Endothelial cell of umbilical vein (primary cell): ENCODE measurements at regions of chr2 and their contacts with region 1.

Region 1: GRCh38 chr2:170324640-170325046 is 146.7 kb downstream of the MYO3B start:
- DNase-seq: peak; percentile 40
- H3K4me3 ChIP-seq: no peak overlapping the region
- H3K27ac ChIP-seq: no peak overlapping the region
- H3K4me1 ChIP-seq: peaks cover 1% of the 10 kb centered on the region
- H3K27me3 ChIP-seq: peaks cover 3% of the 10 kb centered on the region in 2 experiments
- CTCF ChIP-seq: peak; percentile 56 to 57
- POLR2A ChIP-seq: no peak

Region 2: DNA sequence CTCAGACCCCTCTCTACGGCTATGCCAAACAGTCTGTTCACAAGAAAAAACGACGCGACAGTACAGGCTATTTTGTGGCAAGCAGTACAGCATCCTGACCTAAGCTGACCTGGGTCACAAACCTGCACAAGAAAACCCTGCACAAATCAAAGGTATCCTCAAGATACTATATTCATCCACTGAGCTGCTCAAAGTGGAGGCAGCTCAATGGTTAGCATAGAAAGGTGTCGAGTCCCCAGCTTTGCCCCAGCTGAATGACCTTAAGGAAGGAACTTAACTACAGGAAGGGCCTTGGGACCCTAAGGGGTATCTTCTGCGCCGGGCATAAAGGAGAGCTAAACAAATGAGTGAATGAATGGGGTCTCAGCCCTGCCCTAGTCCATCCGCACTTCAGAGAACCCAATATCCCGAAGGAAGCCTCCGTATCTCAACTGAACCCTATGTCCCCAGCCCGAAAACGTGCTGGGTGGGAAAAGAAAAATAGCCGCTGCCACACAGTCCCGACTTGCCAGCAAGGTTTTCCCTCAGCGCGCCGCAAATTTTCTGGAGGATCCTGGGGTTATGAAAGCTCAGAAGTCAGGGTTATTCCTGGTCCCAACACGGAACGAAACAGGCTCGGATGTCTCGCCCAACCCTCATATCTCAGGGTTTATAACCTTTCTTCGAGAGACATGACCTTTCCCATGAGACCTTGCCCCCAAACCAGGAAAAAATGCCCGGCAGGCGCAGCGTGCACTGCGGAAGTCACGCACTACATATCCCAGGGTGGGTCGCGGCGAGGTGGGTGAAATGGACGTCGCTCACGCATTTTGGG is 751.3 kb before region 1 on chr2 and contains the start of gene FASTKD1:
- CTCF ChIA-PET with region 1: no interaction called
- POLR2A ChIA-PET with region 1: no interaction called
- dilution Hi-C with region 1: no loop called
- intact Hi-C with region 1: no loop called
- DNase-seq: peak; percentile 89
- H3K4me3 ChIP-seq: peak within 1 kb of the TSS; percentile 76 to 95 (median 76)
- H3K27ac ChIP-seq: peak within 1 kb of the TSS; percentile 52
- H3K4me1 ChIP-seq: peaks cover 2% of the 10 kb centered on the region
- H3K27me3 ChIP-seq: no peaks in the 10 kb centered on the region
- CTCF ChIP-seq: no peak
- POLR2A ChIP-seq: peak; percentile 71
- total RNA-seq, gene FASTKD1: 32.2 and 33.4 TPM in 2 replicates

Region 3: DNA sequence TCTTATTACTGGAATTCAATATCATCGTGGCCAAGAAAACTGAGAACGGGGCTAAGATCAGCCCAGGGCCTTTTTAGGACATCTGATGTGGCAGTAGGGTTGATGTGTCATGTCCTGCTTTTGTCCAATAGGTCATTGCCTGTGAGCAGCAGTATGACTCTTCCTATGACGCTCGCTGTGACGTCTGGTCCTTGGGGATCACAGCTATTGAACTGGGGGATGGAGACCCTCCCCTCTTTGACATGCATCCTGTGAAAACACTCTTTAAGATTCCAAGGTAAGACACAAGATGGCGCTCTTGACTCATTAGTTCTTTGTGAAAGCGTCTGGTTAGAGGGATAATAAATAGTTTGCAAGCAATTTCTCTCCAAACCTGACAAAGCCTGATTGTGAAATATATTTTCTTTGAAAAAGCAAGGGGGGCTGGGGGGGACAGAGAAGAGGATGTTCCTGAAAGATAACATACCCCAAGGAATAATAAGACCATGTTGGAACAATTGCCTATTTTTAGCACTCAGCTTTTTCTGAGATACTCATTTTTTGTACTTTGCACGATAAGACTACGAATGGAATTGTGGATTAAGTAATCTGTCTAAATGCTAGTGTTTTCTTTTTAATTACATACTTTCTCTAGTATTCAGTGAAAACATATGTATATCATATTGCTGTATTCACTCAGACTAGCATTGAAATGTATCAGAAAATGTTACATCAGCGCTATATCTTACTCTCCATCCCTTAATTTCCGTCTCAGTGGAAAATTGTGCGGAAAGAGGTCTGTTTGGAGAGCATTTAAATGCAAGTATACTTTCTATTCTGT is 88.6 kb before region 1 on chr2:
- CTCF ChIA-PET with region 1: interaction called, 23 read pairs
- POLR2A ChIA-PET with region 1: no interaction called
- dilution Hi-C with region 1: no loop called
- intact Hi-C with region 1: no loop called
- DNase-seq: peak; percentile 72
- H3K4me3 ChIP-seq: no peak overlapping the region
- H3K27ac ChIP-seq: no peak overlapping the region
- H3K4me1 ChIP-seq: no peaks in the 10 kb centered on the region
- H3K27me3 ChIP-seq: peaks cover 11 to 27% of the 10 kb centered on the region in 2 experiments
- CTCF ChIP-seq: peak; percentile 38 to 45
- POLR2A ChIP-seq: no peak

Region 4: GRCh38 chr2:170313347-170313991 is 11.2 kb before region 1 on chr2:
- CTCF ChIA-PET with region 1: interaction called, 18 read pairs
- POLR2A ChIA-PET with region 1: no interaction called
- dilution Hi-C with region 1: no loop called
- intact Hi-C with region 1: no loop called
- DNase-seq: no peak
- H3K4me3 ChIP-seq: no peak overlapping the region
- H3K27ac ChIP-seq: no peak overlapping the region
- H3K4me1 ChIP-seq: peaks cover 6% of the 10 kb centered on the region
- H3K27me3 ChIP-seq: peaks cover 22 to 32% of the 10 kb centered on the region in 2 experiments
- CTCF ChIP-seq: no peak
- POLR2A ChIP-seq: no peak

Region 5: DNA sequence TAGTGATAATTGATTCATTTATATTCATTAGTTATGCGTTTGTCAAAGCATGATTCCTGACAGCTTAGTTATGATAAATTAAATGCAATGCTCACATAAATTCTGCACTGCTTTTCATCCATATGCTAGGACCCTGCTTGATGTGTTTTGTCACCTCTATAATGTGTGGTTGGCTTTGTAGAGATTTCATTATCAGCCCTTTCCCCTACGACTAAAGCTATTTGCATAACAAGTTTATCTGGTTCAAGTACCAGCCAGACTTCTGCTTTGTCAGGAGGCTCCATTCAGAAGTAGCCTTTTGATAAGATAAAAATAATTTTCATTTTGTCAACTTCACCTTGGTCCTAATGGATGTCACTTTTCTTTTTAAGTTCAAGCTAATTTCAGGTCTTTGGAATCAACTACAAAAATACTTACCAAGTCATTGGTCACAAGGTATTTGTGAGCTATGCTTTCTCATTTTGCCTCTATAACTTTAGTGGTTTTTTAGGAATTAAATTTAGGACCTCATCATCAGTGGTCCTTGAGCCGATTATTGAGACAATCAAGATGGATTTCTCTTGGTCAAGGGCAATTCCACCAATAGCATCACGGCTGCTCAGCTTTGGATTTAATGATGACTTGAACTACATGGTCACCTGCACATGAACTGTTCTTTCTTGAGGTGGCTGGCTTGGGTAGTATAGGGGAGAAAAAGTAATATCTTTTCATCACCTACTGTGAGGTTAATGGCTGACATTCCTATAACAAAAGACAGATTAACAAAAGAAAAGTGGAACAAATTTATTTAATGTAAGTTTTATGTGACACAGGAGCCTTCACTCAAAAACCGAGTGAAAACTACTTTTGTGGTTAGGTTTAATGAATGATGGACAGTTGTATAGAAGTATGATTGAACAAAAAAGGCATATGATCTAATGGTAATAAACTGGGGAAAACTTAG is 15.4 kb after region 1 on chr2:
- CTCF ChIA-PET with region 1: interaction called, 19 read pairs
- POLR2A ChIA-PET with region 1: no interaction called
- dilution Hi-C with region 1: no loop called
- intact Hi-C with region 1: no loop called
- DNase-seq: no peak
- H3K4me3 ChIP-seq: no peak overlapping the region
- H3K27ac ChIP-seq: no peak overlapping the region
- H3K4me1 ChIP-seq: no peaks in the 10 kb centered on the region
- H3K27me3 ChIP-seq: peaks cover 12 to 15% of the 10 kb centered on the region in 2 experiments
- CTCF ChIP-seq: no peak
- POLR2A ChIP-seq: no peak

Region 6: DNA sequence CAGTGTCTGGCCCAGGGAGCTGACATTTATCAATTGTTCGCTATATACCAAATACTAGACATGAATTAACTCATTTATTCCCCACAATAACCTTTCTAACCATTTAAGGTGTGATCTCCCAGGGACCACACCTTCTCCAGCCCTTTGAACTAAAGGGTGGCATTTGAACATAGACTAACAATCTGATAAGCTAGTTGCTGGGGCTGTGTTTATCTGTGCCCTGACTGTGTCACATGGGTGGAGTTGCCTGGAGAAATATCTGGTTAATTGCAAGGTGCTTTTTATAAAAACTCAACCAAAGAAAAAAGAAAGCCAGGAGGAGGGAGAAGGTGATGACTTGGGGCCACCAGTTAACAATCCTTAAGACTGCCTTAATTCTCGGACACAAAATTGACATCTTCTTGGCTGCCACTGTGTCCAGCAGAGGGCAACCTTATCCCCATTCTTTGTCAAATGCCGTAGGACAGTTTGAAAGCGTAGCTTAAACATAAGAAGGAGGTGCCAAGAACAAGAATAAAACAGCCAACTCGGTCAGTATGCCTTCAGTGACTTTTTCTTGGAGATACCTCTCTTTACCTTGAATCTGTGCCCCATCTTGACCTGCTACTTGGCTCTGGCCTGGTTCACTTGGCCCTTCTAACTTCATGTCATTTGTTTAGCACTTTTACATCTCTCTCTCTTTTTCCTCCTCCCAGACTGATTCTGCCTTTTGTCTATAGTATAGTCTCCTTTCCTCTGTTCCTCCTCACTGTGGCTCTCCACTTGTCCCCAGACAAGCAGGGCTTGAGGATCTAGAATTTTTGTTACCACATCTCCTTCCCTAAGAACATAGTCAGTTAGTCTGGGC is 36.7 kb after region 1 on chr2:
- CTCF ChIA-PET with region 1: interaction called, 26 read pairs
- POLR2A ChIA-PET with region 1: no interaction called
- dilution Hi-C with region 1: no loop called
- intact Hi-C with region 1: loop called (anchors 1 kb)
- DNase-seq: peak; percentile 75
- H3K4me3 ChIP-seq: no peak overlapping the region
- H3K27ac ChIP-seq: no peak overlapping the region
- H3K4me1 ChIP-seq: no peaks in the 10 kb centered on the region
- H3K27me3 ChIP-seq: peaks cover 41 to 63% of the 10 kb centered on the region in 2 experiments
- CTCF ChIP-seq: peak; percentile 71 to 72
- POLR2A ChIP-seq: no peak

Region 7: DNA sequence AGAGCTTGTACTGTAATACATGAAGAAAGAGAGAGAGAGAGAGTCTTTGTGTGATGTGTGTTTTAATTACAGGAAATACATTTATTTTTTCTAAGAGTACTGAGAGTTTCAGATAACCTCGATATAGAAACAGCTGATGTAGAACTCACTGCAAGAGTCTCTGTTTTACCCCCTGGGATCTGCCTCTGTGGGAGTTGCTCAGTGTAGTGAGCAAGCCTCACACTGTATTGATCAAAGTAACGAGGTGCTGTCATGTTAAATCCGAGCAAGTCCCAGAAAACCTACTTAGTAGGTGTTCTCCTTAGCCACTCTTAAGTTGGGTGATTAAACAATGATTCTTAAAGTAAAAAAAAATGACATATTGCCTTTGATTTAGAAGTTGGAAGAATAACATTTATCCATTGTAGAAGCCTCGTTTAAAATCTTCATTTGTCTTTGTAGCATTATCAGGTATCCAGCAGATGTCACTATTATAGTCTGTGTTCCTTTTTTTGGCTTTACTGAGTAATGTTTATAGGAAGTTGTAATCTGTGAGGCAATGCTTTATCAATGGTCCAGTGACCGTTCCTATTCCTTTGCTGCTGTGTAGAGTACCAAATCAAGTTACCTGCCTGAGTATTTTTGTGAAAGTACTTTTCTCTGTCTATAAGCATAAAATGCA is 72.3 kb after region 1 on chr2:
- CTCF ChIA-PET with region 1: no interaction called
- POLR2A ChIA-PET with region 1: no interaction called
- dilution Hi-C with region 1: no loop called
- intact Hi-C with region 1: loop called (anchors 2 kb)
- DNase-seq: peak; percentile 25
- H3K4me3 ChIP-seq: no peak overlapping the region
- H3K27ac ChIP-seq: no peak overlapping the region
- H3K4me1 ChIP-seq: no peaks in the 10 kb centered on the region
- H3K27me3 ChIP-seq: peaks cover 4 to 11% of the 10 kb centered on the region in 2 experiments
- CTCF ChIP-seq: no peak
- POLR2A ChIP-seq: no peak